Psoas muscle (tissue), 8 donors: ENCODE measurements at regions of chr18 and their contacts with region 1.

Region 1: GRCh38 chr18:12639990-12640880 is 17.7 kb downstream of the SPIRE1 start:
- DNase-seq: no peak
- ATAC-seq: peak; percentile 70 to 86 (median 81)
- H3K4me3 ChIP-seq: no peak overlapping the region
- H3K27ac ChIP-seq: peak overlapping the region; percentile 53
- H3K4me1 ChIP-seq: peaks cover 22% of the 10 kb centered on the region
- H3K27me3 ChIP-seq: no peaks in the 10 kb centered on the region
- CTCF ChIP-seq: no peak

Region 2: GRCh38 chr18:12589448-12589847 is 50.8 kb before region 1 on chr18:
- intact Hi-C with region 1: loop called in 1 of 2 experiments (anchors 10 kb)
- DNase-seq: no peak
- ATAC-seq: no peak
- H3K4me3 ChIP-seq: no peak overlapping the region
- H3K27ac ChIP-seq: no peak overlapping the region
- H3K4me1 ChIP-seq: no peaks in the 10 kb centered on the region
- H3K27me3 ChIP-seq: no peaks in the 10 kb centered on the region
- CTCF ChIP-seq: no peak

Region 3: GRCh38 chr18:12921178-12921577 is 280.9 kb after region 1 on chr18:
- intact Hi-C with region 1: no loop called
- DNase-seq: no peak
- ATAC-seq: no peak
- H3K4me3 ChIP-seq: no peak overlapping the region
- H3K27ac ChIP-seq: no peak overlapping the region
- H3K4me1 ChIP-seq: no peaks in the 10 kb centered on the region
- H3K27me3 ChIP-seq: no peaks in the 10 kb centered on the region
- CTCF ChIP-seq: no peak